GM12878 (cell line): ENCODE measurements at regions of chr1 and their contacts with region 1.

Region 1: DNA sequence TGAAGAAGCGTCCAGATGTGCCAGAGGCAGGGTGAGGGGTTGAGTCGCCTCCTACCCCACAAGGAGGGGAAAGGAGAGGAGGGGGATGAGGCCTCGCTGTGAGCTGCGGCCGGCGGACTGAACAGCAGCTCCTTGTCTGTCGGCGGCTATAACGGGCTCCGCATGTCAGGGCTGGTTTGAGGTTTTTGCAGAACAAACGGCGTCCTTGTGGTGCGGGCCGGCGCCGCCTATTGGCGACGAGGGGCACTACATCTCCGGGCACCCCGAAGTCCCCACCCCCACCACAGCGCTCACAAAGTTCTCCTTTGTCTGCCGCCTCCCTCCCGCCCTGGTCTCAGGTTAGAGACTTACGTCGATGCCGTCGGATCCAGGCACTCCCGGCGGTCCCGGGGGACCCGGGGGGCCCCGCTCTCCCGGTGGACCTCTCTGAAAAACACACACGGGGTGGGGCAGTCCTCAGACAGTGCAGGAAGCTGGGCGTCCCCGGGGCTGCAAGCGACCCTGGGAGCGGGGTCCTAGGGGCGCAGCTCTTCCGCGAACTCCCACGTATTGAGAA is 1.8 kb downstream of the COL9A2 start:
- DNase-seq: peak; percentile 53
- ATAC-seq: peak; percentile 72
- H3K4me3 ChIP-seq: peak overlapping the region; percentile 70
- H3K27ac ChIP-seq: peak overlapping the region; percentile 59
- H3K4me1 ChIP-seq: peaks cover 41% of the 10 kb centered on the region
- H3K27me3 ChIP-seq: peaks cover 4 to 9% of the 10 kb centered on the region in 2 experiments; a peak in 3 of 4 replicates
- CTCF ChIP-seq: peak; percentile 96 to 98 (median 98)
- EP300 ChIP-seq: peak in 1 of 2 experiments; percentile 24; a peak in 1 of 4 replicates
- POLR2A ChIP-seq: peak; percentile 87
- RAD21 ChIP-seq: peak; percentile 69

Region 2: DNA sequence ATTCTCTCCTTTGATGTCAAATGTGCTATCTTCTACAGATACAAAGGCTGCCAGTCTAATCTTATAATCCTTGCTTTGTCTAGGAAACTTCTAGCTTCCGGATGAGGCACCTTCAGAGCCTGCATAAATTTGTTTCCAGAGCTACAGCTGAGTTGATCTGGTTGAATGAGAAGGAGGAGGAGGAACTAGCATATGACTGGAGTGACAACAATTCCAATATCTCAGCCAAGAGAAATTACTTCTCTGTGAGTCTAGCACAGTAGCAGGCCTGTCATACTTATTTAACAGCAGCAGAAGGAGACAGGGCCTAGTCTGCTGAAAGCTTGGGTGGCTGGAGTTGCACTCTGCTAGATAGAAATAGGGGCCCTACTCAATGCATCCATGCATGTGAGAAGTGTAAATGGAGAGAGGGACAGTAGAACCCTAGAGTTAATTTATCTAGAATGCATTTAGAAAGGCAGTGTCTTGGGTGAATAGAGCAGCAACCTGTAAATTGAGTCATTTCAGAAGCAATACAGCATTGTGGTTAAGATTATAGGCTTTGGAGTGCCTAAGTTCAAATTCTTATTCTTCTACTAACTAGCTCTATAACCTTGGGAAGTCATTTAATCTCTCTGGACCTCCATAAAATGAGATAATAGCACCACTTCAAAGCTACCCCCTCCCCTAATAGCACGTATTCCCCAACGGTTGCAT is 1021.8 kb before region 1 on chr1:
- CTCF ChIA-PET with region 1: no interaction called
- POLR2A ChIA-PET with region 1: no interaction called
- RAD21 ChIA-PET with region 1: no interaction called
- SMC1A ChIA-PET with region 1: no interaction called
- in situ Hi-C with region 1: no loop called
- intact Hi-C with region 1: no loop called
- DNase-seq: no peak
- ATAC-seq: no peak; the same call in 2 of the 3 replicates
- H3K4me3 ChIP-seq: no peak overlapping the region
- H3K27ac ChIP-seq: no peak overlapping the region
- H3K4me1 ChIP-seq: no peaks in the 10 kb centered on the region
- H3K27me3 ChIP-seq: no peaks in the 10 kb centered on the region
- CTCF ChIP-seq: no peak
- EP300 ChIP-seq: no peak
- POLR2A ChIP-seq: no peak
- RAD21 ChIP-seq: no peak

Region 3: GRCh38 chr1:40078512-40079333 is 236.6 kb before region 1 on chr1:
- CTCF ChIA-PET with region 1: interaction called, 16 read pairs
- POLR2A ChIA-PET with region 1: interaction called, 3 read pairs
- RAD21 ChIA-PET with region 1: no interaction called
- SMC1A ChIA-PET with region 1: interaction called, 7 read pairs
- in situ Hi-C with region 1: no loop called
- intact Hi-C with region 1: no loop called
- DNase-seq: no peak
- ATAC-seq: peak; percentile 98
- H3K4me3 ChIP-seq: no peak overlapping the region
- H3K27ac ChIP-seq: no peak overlapping the region
- H3K4me1 ChIP-seq: no peaks in the 10 kb centered on the region
- H3K27me3 ChIP-seq: no peaks in the 10 kb centered on the region
- CTCF ChIP-seq: peak; percentile 74 to 85 (median 75)
- EP300 ChIP-seq: no peak
- POLR2A ChIP-seq: no peak
- RAD21 ChIP-seq: peak; percentile 63

Region 4: DNA sequence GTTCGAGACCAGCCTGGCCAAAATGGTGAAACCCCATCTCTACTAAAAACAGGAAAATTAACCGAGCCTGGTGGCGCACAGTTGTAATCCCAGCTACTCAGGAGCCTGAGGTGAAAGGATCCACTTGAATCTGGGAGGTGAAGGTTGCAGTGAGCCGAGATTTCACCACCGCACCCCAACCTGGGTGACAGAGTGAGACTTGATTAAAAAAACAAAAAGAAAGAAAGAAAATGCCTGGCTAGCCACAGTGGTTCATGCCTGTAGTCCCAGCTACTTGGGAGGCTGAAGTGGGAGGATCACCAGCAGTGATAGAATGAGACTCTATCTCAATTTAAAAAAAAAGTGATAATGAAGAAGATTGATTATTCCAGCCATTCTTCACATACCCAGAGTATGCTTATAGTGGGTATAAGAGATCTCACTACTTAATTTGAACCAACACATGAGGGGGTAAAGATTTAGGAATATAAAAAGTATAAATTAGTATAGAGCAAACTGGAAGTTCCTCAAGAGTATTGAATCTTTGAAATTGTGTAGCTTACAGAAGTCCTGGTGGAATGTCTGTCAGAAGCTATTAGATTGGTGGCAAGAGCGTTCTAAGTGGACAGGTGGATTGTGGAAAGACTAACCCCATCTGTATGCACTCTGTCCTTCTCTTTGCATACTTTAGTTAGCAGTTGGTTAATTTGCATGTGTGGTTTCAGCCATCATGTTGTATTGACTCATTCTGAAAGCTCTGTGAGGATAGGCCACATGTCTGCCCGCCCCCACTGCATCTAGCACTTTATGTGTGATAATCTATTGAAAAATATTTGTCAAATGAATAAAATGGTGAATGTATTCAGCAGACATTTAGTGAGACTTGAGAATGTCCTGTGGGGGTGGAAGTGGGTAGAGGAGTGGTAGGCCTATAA is 129.1 kb before region 1 on chr1:
- CTCF ChIA-PET with region 1: interaction called, 26 read pairs
- POLR2A ChIA-PET with region 1: no interaction called
- RAD21 ChIA-PET with region 1: interaction called, 8 read pairs
- SMC1A ChIA-PET with region 1: interaction called, 5 read pairs
- in situ Hi-C with region 1: no loop called
- intact Hi-C with region 1: no loop called
- DNase-seq: peak; percentile 82
- ATAC-seq: peak; percentile 99
- H3K4me3 ChIP-seq: peak overlapping the region; percentile 60
- H3K27ac ChIP-seq: peak overlapping the region; percentile 71
- H3K4me1 ChIP-seq: peaks cover 32% of the 10 kb centered on the region
- H3K27me3 ChIP-seq: no peaks in the 10 kb centered on the region
- CTCF ChIP-seq: no peak
- EP300 ChIP-seq: peak; percentile 94
- POLR2A ChIP-seq: peak; percentile 57
- RAD21 ChIP-seq: no peak

Region 5: DNA sequence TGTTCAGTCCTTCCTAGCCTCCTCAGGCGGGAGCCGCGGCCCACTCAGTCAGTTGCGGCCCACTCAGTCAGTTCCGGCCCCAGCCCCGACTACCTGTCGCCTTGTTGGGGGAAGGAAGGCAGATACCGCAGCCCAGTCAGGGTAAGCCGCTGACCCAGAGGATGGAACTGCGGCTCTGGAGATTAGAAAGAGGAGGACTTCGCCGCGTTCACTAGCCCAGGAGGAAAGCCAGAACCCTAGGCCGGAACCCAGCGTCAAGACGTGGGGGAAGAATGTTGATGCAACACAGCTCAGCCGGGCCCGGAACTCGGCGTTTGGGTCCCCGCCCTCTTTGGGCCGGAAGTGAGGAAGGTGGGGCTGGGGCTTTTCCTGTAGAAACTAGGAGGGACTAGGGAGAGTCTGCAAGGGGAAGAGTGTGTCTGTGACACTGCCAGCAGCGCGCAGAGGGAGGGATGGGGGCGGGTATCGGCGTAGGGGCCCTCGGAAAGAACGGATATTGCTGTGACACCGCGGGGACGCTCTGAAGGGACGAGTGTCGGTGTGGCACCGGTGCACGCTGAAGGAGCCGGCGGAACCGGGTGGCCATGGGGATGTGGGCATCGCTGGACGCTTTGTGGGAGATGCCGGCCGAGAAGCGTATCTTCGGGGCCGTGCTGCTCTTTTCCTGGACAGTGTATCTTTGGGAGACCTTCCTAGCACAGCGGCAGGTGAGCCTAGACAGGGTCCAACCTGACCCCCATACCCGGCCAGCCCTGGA is 57.5 kb before region 1 on chr1 and contains the start of gene ZMPSTE24:
- CTCF ChIA-PET with region 1: interaction called, 21 read pairs
- POLR2A ChIA-PET with region 1: interaction called, 4 read pairs
- RAD21 ChIA-PET with region 1: interaction called, 6 read pairs
- SMC1A ChIA-PET with region 1: interaction called, 4 read pairs
- in situ Hi-C with region 1: no loop called
- intact Hi-C with region 1: loop called (anchors 1 kb)
- DNase-seq: peak; percentile 87
- ATAC-seq: peak; percentile 98
- H3K4me3 ChIP-seq: peak within 1 kb of the TSS; percentile 84
- H3K27ac ChIP-seq: peak within 1 kb of the TSS; percentile 99
- H3K4me1 ChIP-seq: peaks cover 8% of the 10 kb centered on the region; the same call in 1 of the 2 replicates
- H3K27me3 ChIP-seq: no peaks in the 10 kb centered on the region
- CTCF ChIP-seq: no peak
- EP300 ChIP-seq: 0 out of 4 replicates have a peak, but pooled peaks of 1 of the 2 experiments have one; percentile 51
- POLR2A ChIP-seq: peak; percentile 90
- RAD21 ChIP-seq: peak; percentile 22; the same call in 1 of the 2 replicates
- polyA plus RNA-seq, gene ZMPSTE24: 30.1 to 56.0 TPM

Region 6: DNA sequence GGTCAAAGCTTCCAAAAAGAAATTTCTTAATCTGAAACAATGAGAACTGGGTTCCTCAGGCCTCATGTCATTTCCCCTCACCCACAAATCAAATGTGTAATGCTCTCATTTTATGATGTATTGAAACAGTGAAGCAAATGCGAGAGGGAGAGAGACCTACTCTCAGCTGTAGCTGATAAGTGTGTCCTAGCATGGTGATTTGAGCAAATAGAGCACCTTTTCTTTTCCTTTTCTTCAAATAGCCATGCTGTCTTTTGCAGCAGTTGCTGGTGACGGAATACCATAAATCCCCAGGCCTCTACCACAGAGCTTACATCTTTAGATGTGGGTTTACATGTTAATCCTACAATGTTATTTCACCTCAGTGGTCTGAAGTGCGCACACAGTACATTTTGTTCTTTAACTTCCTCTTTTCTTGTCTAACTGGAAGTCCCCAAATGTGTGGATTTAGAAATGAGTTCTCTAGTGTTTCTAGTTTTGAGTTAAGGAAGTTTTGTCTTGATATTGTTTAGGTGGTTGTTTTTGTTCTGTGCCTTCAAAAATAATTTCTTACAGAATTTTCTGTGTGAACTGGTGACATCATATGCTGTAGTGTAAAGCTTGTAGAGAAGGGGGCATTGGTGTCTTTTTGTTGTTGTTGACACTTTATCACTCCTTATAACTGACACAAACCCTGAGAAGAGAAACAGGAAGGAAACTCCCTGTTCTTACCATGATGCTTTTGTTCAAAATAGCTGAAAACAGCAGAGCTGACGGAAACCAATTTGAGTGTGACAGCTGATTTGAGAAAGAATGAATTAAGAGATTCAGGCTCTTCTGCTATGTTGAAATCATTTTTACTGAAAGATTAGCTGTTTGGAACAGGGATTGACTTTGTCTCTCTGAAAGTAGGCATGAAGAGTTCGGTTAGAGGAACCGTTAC is 70.4 kb after region 1 on chr1:
- CTCF ChIA-PET with region 1: interaction called, 9 read pairs
- POLR2A ChIA-PET with region 1: interaction called, 21 read pairs
- RAD21 ChIA-PET with region 1: interaction called, 57 read pairs
- SMC1A ChIA-PET with region 1: interaction called, 24 read pairs
- in situ Hi-C with region 1: no loop called
- intact Hi-C with region 1: no loop called
- DNase-seq: peak; percentile 98
- ATAC-seq: peak; percentile 72
- H3K4me3 ChIP-seq: peak overlapping the region; percentile 66
- H3K27ac ChIP-seq: peak overlapping the region; percentile 97
- H3K4me1 ChIP-seq: peaks cover 65% of the 10 kb centered on the region
- H3K27me3 ChIP-seq: no peaks in the 10 kb centered on the region
- CTCF ChIP-seq: no peak
- EP300 ChIP-seq: peak; percentile 98 to 99
- POLR2A ChIP-seq: no peak
- RAD21 ChIP-seq: peak; percentile 15; the same call in 1 of the 2 replicates

Region 7: GRCh38 chr1:41101950-41102607 is 786.8 kb after region 1 on chr1:
- CTCF ChIA-PET with region 1: no interaction called
- POLR2A ChIA-PET with region 1: no interaction called
- RAD21 ChIA-PET with region 1: no interaction called
- SMC1A ChIA-PET with region 1: no interaction called
- in situ Hi-C with region 1: no loop called
- intact Hi-C with region 1: no loop called
- DNase-seq: no peak
- ATAC-seq: no peak
- H3K4me3 ChIP-seq: no peak overlapping the region
- H3K27ac ChIP-seq: no peak overlapping the region
- H3K4me1 ChIP-seq: peaks cover 4% of the 10 kb centered on the region
- H3K27me3 ChIP-seq: no peaks in the 10 kb centered on the region
- CTCF ChIP-seq: no peak
- EP300 ChIP-seq: no peak
- POLR2A ChIP-seq: no peak
- RAD21 ChIP-seq: no peak